ENCODE measurements at regions of chr11 and their contacts with region 1.

Region 1: DNA sequence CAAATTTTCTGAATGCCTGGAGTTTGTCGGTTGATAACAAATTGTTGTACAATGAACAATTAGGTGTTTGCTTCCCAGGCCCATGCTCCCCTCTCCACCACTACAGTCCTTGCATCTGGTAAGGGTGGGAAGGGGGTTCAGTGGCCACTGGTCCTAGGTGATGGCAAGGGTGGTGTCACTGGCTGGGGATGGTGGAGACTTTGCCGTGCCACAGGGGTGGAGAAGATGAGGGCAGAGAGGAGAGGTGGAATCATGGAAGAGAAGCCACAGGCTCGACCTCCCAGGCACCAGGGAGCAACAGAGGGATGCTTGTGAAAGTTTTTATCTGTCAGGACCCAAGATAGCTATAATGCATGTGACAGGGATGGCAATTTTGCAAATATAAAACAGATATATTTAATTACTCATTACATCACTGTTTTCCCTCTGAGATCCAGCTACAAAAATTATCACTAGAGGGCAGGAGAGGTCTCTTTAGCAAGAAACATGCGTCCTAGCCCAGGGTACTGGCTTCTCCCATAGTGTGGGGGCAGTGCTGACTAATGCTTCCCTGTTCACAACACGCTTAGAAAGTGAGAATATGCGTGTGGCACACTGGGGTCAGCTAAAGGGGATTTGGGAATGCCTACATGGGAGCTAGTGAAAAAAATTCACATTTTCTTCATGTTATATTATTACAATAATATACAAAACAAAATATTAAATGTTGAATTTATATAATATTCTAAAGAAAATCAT is 49.0 kb upstream of the AMPD3 start:
- DNase-seq: peak; percentile 79 to 80
- H3K4me3 ChIP-seq: no peak overlapping the region
- H3K27ac ChIP-seq: no peak overlapping the region
- H3K4me1 ChIP-seq: peaks cover 0 to 11% (median 4%) of the 10 kb centered on the region in 4 donors
- H3K27me3 ChIP-seq: no peaks in the 10 kb centered on the region
- CTCF ChIP-seq: peak; percentile 72 to 75

Region 2: GRCh38 chr11:10067629-10068300 is 338.3 kb before region 1 on chr11:
- intact Hi-C with region 1: no loop called
- DNase-seq: no peak
- H3K4me3 ChIP-seq: no peak overlapping the region
- H3K27ac ChIP-seq: no peak overlapping the region
- H3K4me1 ChIP-seq: peaks cover 0 to 3% (median 0%) of the 10 kb centered on the region in 4 donors
- H3K27me3 ChIP-seq: no peaks in the 10 kb centered on the region
- CTCF ChIP-seq: no peak

Region 3: GRCh38 chr11:10338287-10338686 is 67.7 kb before region 1 on chr11:
- intact Hi-C with region 1: no loop called
- DNase-seq: no peak
- H3K4me3 ChIP-seq: no peak overlapping the region
- H3K27ac ChIP-seq: no peak overlapping the region
- H3K4me1 ChIP-seq: no peaks in the 10 kb centered on the region
- H3K27me3 ChIP-seq: no peaks in the 10 kb centered on the region
- CTCF ChIP-seq: no peak

Region 4: DNA sequence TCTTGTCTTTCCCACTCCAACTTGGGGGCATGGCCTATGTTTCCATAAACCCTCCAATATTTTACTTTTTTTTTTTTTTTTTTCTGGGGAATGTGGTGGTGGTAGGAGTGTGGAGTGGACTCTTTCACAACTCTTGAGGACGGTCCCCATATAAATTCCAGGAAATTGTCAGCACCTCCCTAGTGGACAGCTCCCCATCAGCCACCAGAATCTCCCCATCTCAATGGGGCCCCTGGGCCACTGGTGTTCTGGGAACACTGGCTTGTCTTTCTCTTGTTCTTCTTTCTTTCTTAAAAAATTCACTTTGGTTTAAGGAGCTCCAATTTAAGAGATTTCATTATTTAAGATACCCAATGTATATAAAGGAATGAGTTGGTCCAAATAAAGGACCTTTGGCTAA is 27.0 kb before region 1 on chr11:
- intact Hi-C with region 1: no loop called
- DNase-seq: no peak
- H3K4me3 ChIP-seq: no peak overlapping the region
- H3K27ac ChIP-seq: peak overlapping the region in 1 of 2 donors; percentile 6
- H3K4me1 ChIP-seq: peaks cover 0 to 39% (median 0%) of the 10 kb centered on the region in 4 donors
- H3K27me3 ChIP-seq: no peaks in the 10 kb centered on the region
- CTCF ChIP-seq: no peak

Region 5: GRCh38 chr11:10514210-10514609 is 108.2 kb after region 1 on chr11:
- intact Hi-C with region 1: loop called (anchors 5 kb)
- DNase-seq: no peak
- H3K4me3 ChIP-seq: no peak overlapping the region
- H3K27ac ChIP-seq: peak overlapping the region; percentile 36 to 42
- H3K4me1 ChIP-seq: peaks cover 0 to 36% (median 8%) of the 10 kb centered on the region in 4 donors
- H3K27me3 ChIP-seq: no peaks in the 10 kb centered on the region
- CTCF ChIP-seq: peak; percentile 43 to 44

Region 6: GRCh38 chr11:10735481-10736475 is 329.8 kb after region 1 on chr11:
- intact Hi-C with region 1: loop called (anchors 1 kb)
- DNase-seq: peak; percentile 95 to 96
- H3K4me3 ChIP-seq: peak overlapping the region; percentile 15 to 28
- H3K27ac ChIP-seq: peak overlapping the region; percentile 68 to 70
- H3K4me1 ChIP-seq: peaks cover 0 to 35% (median 13%) of the 10 kb centered on the region in 4 donors
- H3K27me3 ChIP-seq: no peaks in the 10 kb centered on the region
- CTCF ChIP-seq: peak; percentile 98 to 99